ENCODE measurements at regions of chr3 and their contacts with region 1.

Region 1: GRCh38 chr3:30199096-30199759 is 407.2 kb upstream of the TGFBR2 start:
- DNase-seq: peak; percentile 88
- ATAC-seq: peak; percentile 84

Region 2: GRCh38 chr3:30007668-30008067 is 191.6 kb before region 1 on chr3:
- intact Hi-C with region 1: no loop called
- DNase-seq: no peak
- ATAC-seq: no peak

Region 3: DNA sequence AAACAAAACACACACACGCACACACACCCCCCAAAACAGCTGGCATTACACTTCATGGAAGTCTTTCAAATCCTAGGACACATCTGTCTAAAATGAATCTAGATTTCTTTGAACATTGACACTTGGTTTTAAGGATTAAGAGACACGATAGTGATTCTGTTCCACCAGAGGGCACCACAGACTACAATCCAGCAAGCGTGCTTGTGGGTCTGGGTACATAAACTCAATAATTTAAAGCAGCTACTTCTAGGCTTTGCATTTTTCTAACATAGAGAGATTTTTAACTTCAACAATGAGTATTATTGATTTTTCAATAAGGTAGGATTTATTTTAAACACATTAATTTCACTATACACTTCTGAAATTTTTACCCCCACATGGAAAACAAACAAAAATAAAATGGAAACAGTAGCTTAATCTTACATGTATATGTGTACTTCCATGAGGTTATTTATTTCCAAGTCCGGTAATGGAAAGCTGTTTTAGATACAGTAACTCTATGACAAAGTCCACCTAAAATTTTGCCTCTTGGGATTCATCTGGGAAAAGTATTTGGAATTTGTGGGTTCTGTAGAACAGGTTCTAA is 156.9 kb before region 1 on chr3:
- intact Hi-C with region 1: loop called (anchors 5 kb)
- DNase-seq: peak; percentile 47
- ATAC-seq: peak; percentile 88

Region 4: DNA sequence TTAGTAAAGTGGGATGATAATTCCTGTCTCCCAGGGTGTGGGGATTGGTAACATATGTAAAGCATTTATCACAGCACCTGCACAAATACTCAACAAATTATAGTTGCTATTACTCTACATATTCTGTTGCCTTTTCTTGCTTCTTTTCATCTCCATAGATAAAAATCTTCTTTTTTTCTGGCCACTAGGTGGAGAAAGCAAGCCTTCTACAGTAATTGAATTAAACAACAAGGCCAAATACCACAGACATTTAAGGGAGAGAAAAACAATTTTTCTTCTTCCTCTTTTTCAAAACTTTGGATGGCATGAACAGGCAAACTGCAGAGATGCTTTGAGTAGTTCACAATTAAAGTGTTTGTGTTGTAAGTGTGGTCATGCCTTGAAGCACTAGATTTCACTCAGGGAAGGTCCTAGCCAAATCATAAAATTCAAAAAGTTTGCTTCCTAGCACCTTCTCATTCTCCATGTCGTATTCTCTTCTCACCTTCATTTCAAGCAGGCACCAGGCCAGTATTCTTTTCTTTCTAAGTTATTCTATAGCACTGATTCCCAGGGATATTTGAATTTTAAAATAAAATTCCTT is 86.2 kb before region 1 on chr3:
- intact Hi-C with region 1: loop called (anchors 1 kb)
- DNase-seq: no peak
- ATAC-seq: peak; percentile 69

Region 5: GRCh38 chr3:30248423-30248822 is 49.2 kb after region 1 on chr3:
- intact Hi-C with region 1: no loop called
- DNase-seq: no peak
- ATAC-seq: no peak

Region 6: DNA sequence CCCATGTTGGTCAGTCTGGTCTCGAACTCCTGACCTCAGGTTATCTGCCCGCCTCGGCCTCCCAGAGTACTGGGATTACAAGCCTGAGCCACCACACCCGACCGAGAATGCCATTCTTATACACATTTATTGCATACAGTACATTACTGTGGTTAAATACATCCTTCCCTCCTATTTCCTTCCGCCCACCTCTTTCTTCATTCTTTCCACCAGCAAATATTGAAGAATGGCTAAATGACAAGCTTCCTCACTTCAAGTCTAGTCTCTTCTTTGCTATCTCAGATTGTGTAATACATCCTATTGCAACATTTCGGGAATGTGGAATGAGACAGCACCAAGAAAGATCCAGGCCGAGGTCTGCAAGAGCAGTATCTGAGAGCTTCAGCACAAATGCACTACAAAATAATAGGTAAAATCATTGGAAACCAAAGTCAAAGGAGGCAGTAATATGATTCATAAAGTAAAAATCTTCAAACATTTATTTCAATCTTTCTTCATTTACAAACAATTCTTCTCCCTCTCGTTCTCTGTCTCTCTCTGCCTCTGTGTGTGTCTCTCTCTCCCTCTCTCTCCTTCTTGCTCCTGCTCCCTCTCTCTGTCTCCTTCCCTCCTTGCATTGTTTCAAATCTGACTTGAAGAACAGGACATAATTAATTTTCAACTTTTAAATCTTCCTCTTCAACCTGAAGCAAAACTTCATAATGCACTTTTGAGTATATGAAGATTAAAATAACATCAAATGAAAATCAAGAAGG is 312.5 kb after region 1 on chr3:
- intact Hi-C with region 1: no loop called
- DNase-seq: no peak
- ATAC-seq: peak; percentile 93

Region 7: GRCh38 chr3:30804984-30805383 is 605.8 kb after region 1 on chr3:
- intact Hi-C with region 1: no loop called
- DNase-seq: no peak
- ATAC-seq: no peak